ENCODE measurements at regions of chr12 and their contacts with region 1.

Region 1: DNA sequence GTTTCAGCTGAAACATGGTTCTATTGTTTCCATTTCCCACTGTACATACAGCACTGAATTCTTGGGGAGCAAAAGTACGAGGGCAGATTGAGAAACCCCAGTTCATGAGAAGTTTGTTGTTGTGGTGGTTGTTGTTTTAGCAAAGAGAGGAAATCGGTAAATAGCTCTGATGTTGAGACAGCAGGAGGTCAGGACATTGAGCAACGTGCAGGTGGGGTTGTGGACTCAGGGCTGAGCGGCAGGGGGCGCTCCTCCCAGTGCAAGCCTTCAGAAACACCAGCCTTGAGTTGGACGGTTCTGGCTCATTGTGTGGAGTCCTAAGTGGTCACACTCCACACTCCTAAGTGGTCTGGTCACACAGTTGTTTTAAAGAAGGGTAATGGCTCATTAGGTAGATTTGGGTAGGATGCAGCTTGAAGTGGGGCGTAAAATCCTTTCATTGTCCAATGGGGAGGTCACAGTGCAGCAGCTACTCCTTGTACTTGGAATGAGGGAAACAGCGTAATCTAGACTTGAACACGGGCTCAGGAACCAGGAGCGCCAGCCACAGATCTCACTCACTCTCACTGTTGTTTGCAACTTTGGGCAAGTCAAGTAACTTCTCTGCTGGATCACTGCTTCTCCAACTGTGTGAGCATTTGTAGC is 14.5 kb upstream of the PWP1 start:
- DNase-seq: peak in 2 of 5 donors; percentile 16
- H3K4me3 ChIP-seq: no peak overlapping the region
- H3K27ac ChIP-seq: no peak overlapping the region
- H3K4me1 ChIP-seq: no peaks in the 10 kb centered on the region
- H3K27me3 ChIP-seq: no peaks in the 10 kb centered on the region
- CTCF ChIP-seq: peak; percentile 21

Region 2: GRCh38 chr12:107884769-107885694 is 213.9 kb after region 1 on chr12:
- intact Hi-C with region 1: loop called (anchors 10 kb)
- DNase-seq: peak in 4 of 5 donors; percentile 38 to 74 (median 62)
- H3K4me3 ChIP-seq: no peak overlapping the region
- H3K27ac ChIP-seq: no peak overlapping the region
- H3K4me1 ChIP-seq: no peaks in the 10 kb centered on the region
- H3K27me3 ChIP-seq: no peaks in the 10 kb centered on the region
- CTCF ChIP-seq: peak; percentile 58